ENCODE measurements at regions of chr10 and their contacts with region 1.

Region 1: GRCh38 chr10:89466599-89467035 is 52.2 kb downstream of the IFIT5 start:
- DNase-seq: no peak
- ATAC-seq: peak; percentile 42

Region 2: GRCh38 chr10:89502556-89502955 is 35.9 kb after region 1 on chr10:
- intact Hi-C with region 1: no loop called
- DNase-seq: no peak
- ATAC-seq: peak; percentile 37

Region 3: GRCh38 chr10:89553064-89553734 is 86.6 kb after region 1 on chr10:
- intact Hi-C with region 1: loop called (anchors 5 kb)
- DNase-seq: no peak
- ATAC-seq: peak; percentile 71

Measured in Right ventricle myocardium inferior (tissue), 1 donor.